Mammary epithelial cell (primary cell): ENCODE measurements at regions of chr2 and their contacts with region 1.

Region 1: GRCh38 chr2:168346725-168347477 is 99.5 kb upstream of the STK39 start:
- DNase-seq: peak; percentile 52
- H3K4me3 ChIP-seq: peak overlapping the region; percentile 62 to 72 (median 66)
- H3K27ac ChIP-seq: peak overlapping the region; percentile 60
- H3K4me1 ChIP-seq: peaks cover 9% of the 10 kb centered on the region
- H3K27me3 ChIP-seq: no peaks in the 10 kb centered on the region
- CTCF ChIP-seq: peak; percentile 76

Region 2: GRCh38 chr2:168316073-168316440 is 30.8 kb before region 1 on chr2:
- CTCF ChIA-PET with region 1: no interaction called
- dilution Hi-C with region 1: no loop called
- in situ Hi-C with region 1: no loop called
- intact Hi-C with region 1: no loop called
- DNase-seq: no peak
- H3K4me3 ChIP-seq: no peak overlapping the region
- H3K27ac ChIP-seq: no peak overlapping the region
- H3K4me1 ChIP-seq: peaks cover 5% of the 10 kb centered on the region
- H3K27me3 ChIP-seq: no peaks in the 10 kb centered on the region
- CTCF ChIP-seq: no peak

Region 3: DNA sequence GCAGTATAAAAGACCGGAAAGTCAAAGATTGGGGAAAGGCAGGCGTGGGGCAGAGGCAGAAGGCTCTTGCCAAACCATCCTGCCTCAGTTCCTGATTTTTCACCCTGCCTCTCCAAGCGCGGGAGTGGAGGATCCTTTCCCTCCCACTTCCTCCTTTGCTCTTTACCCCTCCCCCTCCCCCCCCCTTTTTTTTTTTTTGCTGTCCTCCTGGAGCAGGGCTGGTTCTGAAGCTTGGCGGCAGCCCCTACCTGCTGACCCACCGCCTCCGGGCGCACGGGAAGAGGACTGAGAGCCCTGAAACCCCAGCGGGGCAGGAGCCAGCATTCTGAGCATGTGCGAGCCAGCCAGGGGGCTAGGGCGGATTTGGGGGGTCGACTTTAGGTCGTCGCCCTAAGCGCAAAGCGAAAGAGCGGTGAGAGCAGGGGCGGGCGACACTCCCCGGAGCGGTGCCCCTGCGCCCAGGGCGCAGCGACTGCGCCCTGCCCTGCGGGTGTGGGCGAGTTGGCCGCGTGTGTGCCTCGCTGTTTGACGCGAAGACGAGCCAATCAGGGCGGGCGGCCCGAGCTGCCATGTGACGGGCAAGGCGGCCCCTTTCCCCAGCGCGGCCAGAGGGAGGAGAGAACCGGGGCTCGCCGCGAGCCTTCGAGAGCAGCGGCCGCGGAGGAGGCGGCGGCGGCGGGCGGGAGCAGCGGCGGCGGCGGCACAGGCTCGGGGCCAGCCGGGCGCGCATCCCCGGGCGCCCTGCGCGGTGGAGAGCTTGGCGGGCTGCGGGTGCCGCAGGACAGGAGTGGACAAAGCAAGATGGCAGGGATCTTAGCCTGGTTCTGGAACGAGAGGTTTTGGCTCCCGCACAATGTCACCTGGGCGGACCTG is 109.0 kb after region 1 on chr2 and contains the start of gene CERS6:
- CTCF ChIA-PET with region 1: no interaction called
- dilution Hi-C with region 1: no loop called
- in situ Hi-C with region 1: no loop called
- intact Hi-C with region 1: loop called (anchors 2 kb)
- DNase-seq: peak; percentile 95
- H3K4me3 ChIP-seq: peak within 1 kb of the TSS; percentile 89 to 94 (median 90)
- H3K27ac ChIP-seq: peak within 1 kb of the TSS; percentile 79
- H3K4me1 ChIP-seq: peaks cover 20% of the 10 kb centered on the region
- H3K27me3 ChIP-seq: no peaks in the 10 kb centered on the region
- CTCF ChIP-seq: no peak
- total RNA-seq, gene CERS6: 34.9 to 74.5 TPM

Region 4: DNA sequence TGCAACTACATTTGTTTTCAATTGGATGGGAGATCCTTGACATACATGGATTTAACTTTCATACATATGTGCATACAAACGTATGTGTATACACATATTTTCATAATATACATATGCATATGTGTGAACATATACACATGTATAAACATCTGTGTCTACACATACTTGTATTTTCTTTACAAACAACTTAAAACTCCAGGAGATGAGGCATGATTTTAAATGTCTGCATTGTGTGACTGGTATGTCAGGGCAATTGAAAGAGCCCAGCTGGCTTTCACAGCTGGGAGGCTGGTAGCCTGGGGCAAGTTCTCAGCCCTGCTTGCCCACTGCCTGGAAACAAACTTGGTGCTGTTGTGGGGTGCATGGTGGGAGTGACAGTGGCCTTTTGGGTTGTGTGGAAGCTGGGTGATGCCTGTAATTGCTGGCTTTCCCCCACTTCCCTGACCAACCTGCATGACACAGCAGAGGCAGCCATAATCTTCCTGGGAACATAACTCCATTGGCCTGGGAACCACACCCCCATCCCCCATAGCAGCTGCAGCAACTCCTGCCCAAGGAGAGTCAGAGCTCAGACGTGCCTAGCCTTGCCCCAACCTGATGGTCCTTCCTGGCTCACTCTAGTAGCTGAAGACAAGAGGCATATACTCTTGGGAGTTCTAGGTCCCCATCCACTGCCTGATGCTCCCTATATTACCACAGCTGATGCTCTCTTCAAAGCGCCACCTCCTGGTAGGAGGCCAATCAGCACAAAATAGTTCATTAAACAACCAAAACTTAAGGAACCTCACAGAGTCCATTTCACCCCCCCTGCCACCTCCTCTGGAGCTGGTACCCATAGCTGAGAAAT is 267.5 kb after region 1 on chr2:
- CTCF ChIA-PET with region 1: no interaction called
- dilution Hi-C with region 1: no loop called
- in situ Hi-C with region 1: no loop called
- intact Hi-C with region 1: loop called (anchors 1 kb)
- DNase-seq: peak; percentile 96
- H3K4me3 ChIP-seq: no peak overlapping the region
- H3K27ac ChIP-seq: peak overlapping the region; percentile 84
- H3K4me1 ChIP-seq: peaks cover 27% of the 10 kb centered on the region
- H3K27me3 ChIP-seq: no peaks in the 10 kb centered on the region
- CTCF ChIP-seq: peak; percentile 39 to 42

Region 5: GRCh38 chr2:168699844-168700417 is 353.0 kb after region 1 on chr2:
- CTCF ChIA-PET with region 1: no interaction called
- dilution Hi-C with region 1: no loop called
- in situ Hi-C with region 1: loop called (anchors 10 to 25 kb)
- intact Hi-C with region 1: loop called (anchors 1 kb)
- DNase-seq: no peak
- H3K4me3 ChIP-seq: no peak overlapping the region
- H3K27ac ChIP-seq: no peak overlapping the region
- H3K4me1 ChIP-seq: peaks cover 17% of the 10 kb centered on the region
- H3K27me3 ChIP-seq: no peaks in the 10 kb centered on the region
- CTCF ChIP-seq: no peak

Region 6: GRCh38 chr2:168758970-168759820 is 412.3 kb after region 1 on chr2:
- CTCF ChIA-PET with region 1: interaction called, 4 read pairs
- dilution Hi-C with region 1: loop called (anchors 25 kb)
- in situ Hi-C with region 1: loop called (anchors 5 to 10 kb)
- intact Hi-C with region 1: loop called (anchors 1 kb)
- DNase-seq: peak; percentile 45
- H3K4me3 ChIP-seq: no peak overlapping the region
- H3K27ac ChIP-seq: no peak overlapping the region
- H3K4me1 ChIP-seq: no peaks in the 10 kb centered on the region
- H3K27me3 ChIP-seq: no peaks in the 10 kb centered on the region
- CTCF ChIP-seq: peak; percentile 58 to 65

Region 7: DNA sequence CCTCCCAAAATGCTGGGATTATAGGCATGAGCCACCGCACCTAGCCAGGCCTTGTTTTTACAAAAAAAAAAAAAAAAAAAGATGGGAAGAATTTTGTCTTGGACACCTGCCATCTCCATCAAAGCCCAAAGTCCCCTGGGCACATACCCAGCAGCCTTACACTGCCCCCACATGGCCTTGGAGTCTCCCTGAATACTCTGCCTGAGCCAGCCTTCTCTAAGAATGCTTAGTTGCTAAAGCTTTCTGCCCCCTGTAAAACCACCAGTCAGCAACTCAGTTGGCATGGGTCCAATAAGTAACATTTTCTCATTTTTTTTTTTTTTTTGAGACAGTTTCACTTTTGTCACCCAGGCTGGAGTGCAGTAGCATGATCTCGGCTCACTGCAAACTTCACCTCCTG is 502.7 kb after region 1 on chr2:
- CTCF ChIA-PET with region 1: no interaction called
- dilution Hi-C with region 1: no loop called
- in situ Hi-C with region 1: no loop called
- intact Hi-C with region 1: loop called (anchors 1 kb)
- DNase-seq: no peak
- H3K4me3 ChIP-seq: no peak overlapping the region
- H3K27ac ChIP-seq: no peak overlapping the region
- H3K4me1 ChIP-seq: peaks cover 7% of the 10 kb centered on the region
- H3K27me3 ChIP-seq: no peaks in the 10 kb centered on the region
- CTCF ChIP-seq: peak; percentile 14 to 22

Region 8: GRCh38 chr2:168920504-168921157 is 573.7 kb after region 1 on chr2:
- CTCF ChIA-PET with region 1: no interaction called
- dilution Hi-C with region 1: no loop called
- in situ Hi-C with region 1: loop called (anchors 5 to 10 kb)
- intact Hi-C with region 1: loop called (anchors 1 kb)
- DNase-seq: no peak
- H3K4me3 ChIP-seq: no peak overlapping the region
- H3K27ac ChIP-seq: no peak overlapping the region
- H3K4me1 ChIP-seq: no peaks in the 10 kb centered on the region
- H3K27me3 ChIP-seq: peaks cover under 1% of the 10 kb centered on the region
- CTCF ChIP-seq: peak; percentile 40 to 52

Region 9: DNA sequence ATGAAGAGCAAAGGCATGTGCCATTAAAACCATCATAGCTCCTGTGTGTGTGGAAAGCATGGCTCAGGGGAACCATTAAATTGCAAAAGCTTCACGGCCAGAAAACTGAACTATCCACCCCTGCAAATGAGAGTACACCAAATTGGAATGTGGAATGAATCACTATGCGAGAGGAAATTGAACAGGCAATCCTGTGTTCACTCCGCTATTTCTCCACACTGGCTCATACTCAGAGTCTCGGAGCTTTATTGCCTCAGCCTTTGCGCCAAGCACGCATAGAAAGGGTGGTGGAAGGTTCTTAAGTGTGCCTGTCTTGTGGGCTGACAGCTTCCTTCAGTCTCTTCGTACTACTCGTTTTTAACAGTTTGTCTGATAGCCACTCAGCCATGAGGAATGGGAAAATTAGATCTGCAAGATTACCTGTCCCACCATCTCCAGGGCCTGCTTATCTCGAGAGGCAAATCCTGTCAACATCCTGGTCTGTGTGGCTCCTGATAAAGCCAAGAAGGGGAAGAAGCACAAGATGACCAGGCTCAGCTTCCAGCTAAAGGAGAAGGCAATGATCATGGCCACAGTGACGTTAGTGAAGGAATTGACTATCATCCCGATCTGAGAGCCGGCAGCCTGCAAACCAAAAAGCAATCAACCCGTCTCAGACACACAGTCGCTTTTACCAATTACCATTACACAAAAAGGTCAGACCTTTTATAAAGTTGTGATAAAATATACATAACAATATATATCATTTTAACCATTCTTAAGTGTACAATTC is 589.1 kb after region 1 on chr2:
- CTCF ChIA-PET with region 1: no interaction called
- dilution Hi-C with region 1: no loop called
- in situ Hi-C with region 1: no loop called
- intact Hi-C with region 1: no loop called
- DNase-seq: peak; percentile 72
- H3K4me3 ChIP-seq: no peak overlapping the region
- H3K27ac ChIP-seq: no peak overlapping the region
- H3K4me1 ChIP-seq: no peaks in the 10 kb centered on the region
- H3K27me3 ChIP-seq: peaks cover 2% of the 10 kb centered on the region
- CTCF ChIP-seq: no peak

Region 10: DNA sequence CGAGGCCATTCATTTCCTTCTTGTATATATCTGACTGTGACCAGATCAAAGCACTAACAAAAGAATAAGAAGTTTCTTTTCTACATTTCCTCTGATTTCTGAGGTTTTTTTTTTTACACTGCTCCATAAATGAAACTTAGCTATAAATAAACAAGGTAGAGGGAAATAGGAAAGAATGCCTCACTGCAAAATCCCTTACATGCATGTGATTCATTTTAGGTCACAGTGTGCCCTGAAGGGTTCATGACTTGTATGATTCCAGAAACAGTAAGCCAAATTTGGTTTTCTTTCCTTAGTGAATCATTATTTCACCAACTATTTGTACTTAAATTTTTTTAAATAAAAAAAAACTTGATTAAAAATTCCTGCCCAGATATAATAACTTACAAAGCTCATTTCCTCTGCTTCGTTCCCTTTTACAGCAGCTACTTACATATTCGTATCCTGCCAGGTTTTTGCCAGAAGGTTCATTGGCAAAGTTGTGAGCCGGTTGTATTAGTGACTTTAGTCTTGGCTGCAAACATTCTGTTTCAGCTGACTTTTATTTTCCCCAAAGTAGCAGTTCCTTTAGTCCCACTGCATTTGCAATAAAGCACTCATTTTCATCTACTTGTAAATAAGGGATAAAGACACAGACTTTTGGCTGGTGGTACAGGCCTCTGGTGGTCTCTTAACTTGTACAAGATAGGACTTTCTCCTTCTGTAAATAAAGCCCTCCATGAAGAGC is 956.8 kb after region 1 on chr2:
- CTCF ChIA-PET with region 1: no interaction called
- dilution Hi-C with region 1: no loop called
- in situ Hi-C with region 1: no loop called
- intact Hi-C with region 1: no loop called
- DNase-seq: peak; percentile 13
- H3K4me3 ChIP-seq: no peak overlapping the region
- H3K27ac ChIP-seq: no peak overlapping the region
- H3K4me1 ChIP-seq: no peaks in the 10 kb centered on the region
- H3K27me3 ChIP-seq: peaks cover 2% of the 10 kb centered on the region
- CTCF ChIP-seq: no peak